CD8-positive, alpha-beta T cell (primary cell): ENCODE measurements at regions of chr6 and their contacts with region 1.

Region 1: DNA sequence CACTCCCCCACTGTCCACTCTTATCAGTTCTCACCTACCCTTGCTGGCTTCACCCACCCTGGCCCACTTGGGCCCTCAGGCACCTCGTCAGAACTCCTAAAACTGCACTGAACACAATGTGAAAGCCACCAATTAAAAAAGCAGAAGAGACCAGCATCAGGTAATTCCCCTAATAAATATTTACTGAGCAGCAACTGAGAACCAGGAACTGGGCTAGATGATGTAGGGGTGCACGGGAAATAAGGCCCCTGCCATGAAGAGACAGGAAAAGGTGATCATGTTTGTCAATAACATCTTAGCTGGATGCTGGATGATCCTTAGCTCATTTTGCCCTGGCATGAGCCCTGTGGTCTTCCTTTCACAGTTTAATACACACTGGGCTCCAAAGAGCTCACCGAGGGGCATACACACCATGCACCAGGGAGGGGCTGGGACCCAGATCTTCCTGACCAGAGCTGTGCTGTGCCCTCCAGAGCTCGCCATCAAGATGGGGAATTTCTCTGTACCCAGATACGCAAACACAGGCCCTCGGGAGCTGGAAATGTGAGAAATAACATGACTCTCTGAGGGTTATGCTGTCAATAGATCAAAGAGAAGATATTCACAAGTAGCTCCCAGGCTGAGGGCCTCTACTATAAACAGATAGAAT is 113.6 kb upstream of the SLC22A16 start:
- DNase-seq: peak in 1 of 9 experiments; percentile 10
- ATAC-seq: no peak
- H3K4me3 ChIP-seq: no peak overlapping the region
- H3K4me3 Mint-ChIP-seq: no peak overlapping the region
- H3K27ac ChIP-seq: no peak overlapping the region
- H3K27ac Mint-ChIP-seq: no peak overlapping the region
- H3K4me1 ChIP-seq: no peaks in the 10 kb centered on the region
- H3K4me1 Mint-ChIP-seq: no peaks in the 10 kb centered on the region
- H3K27me3 ChIP-seq: no peaks in the 10 kb centered on the region
- H3K27me3 Mint-ChIP-seq: no peaks in the 10 kb centered on the region
- CTCF ChIP-seq: no peak

Region 2: DNA sequence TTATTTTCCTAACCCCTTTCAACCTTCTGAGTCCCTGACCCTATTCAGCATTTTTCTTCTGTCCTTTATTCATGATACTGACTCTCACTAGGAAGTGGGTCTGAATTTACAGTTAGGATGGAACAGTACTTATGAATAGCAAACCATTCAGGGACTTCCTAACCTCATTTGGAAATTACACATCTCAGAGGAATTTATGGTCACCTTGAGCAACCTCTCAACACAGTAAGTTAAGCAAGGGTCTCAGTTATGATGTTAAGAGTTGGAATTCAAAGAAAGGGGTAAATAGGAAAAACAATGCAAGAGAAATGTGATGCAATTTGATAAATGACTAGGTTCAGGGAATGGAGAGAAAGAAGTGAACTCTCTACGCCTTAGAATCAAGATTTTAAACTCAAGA is 514.6 kb before region 1 on chr6:
- CTCF ChIA-PET with region 1: no interaction called
- POLR2A ChIA-PET with region 1: no interaction called
- intact Hi-C with region 1: no loop called
- DNase-seq: no peak
- ATAC-seq: no peak
- H3K4me3 ChIP-seq: no peak overlapping the region
- H3K4me3 Mint-ChIP-seq: no peak overlapping the region
- H3K27ac ChIP-seq: no peak overlapping the region
- H3K27ac Mint-ChIP-seq: no peak overlapping the region
- H3K4me1 ChIP-seq: no peaks in the 10 kb centered on the region
- H3K4me1 Mint-ChIP-seq: no peaks in the 10 kb centered on the region
- H3K27me3 ChIP-seq: no peaks in the 10 kb centered on the region
- H3K27me3 Mint-ChIP-seq: no peaks in the 10 kb centered on the region
- CTCF ChIP-seq: no peak

Region 3: DNA sequence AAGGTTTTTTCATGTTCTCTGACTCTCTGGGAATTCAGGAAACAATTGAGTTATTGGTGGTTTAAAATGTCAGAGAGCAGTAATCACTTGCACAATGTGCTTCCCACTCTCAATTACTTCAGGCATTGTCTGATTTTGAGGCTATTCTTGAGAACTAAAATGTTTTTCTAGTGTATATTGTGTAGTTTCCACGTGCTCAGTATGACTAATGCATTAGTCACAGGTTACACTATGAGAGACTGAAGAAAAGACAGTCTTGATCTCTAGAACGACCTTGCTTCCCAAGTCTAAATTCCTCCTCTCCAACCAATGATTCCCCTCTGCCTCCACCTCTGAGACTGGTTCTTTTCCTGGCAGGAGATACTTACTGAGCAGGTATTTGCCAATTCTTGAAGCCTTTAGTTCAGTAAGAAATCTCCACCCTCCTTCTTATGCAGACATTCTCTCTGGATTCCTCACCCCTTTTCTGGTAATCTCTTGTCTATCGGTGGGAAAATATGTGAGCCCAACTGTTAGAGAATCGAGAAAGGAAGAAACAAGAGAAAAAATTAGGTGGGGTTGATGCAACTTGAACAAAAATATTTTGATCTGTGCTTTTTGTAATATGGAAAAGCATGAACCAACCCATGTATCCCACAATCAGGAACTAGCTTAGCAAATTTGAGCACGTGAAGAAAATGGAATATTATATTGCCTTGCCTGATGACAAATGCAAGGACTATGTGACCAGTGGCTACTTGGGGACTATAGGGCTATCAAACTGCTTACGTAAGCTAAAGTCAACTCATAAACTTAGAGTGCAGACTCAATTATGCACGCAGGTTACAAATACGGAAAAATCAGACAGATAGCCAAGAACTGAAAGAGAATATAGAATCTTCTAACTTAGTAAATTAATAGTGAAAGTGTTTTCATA is 52.5 kb before region 1 on chr6:
- CTCF ChIA-PET with region 1: no interaction called
- POLR2A ChIA-PET with region 1: no interaction called
- intact Hi-C with region 1: loop called in 1 of 2 experiments (anchors 1 kb)
- DNase-seq: no peak
- ATAC-seq: no peak
- H3K4me3 ChIP-seq: no peak overlapping the region
- H3K4me3 Mint-ChIP-seq: no peak overlapping the region
- H3K27ac ChIP-seq: no peak overlapping the region
- H3K27ac Mint-ChIP-seq: no peak overlapping the region
- H3K4me1 ChIP-seq: no peaks in the 10 kb centered on the region
- H3K4me1 Mint-ChIP-seq: peaks cover 2% of the 10 kb centered on the region
- H3K27me3 ChIP-seq: no peaks in the 10 kb centered on the region
- H3K27me3 Mint-ChIP-seq: no peaks in the 10 kb centered on the region
- CTCF ChIP-seq: no peak

Region 4: GRCh38 chr6:110703010-110703905 is 113.3 kb after region 1 on chr6:
- CTCF ChIA-PET with region 1: no interaction called
- POLR2A ChIA-PET with region 1: no interaction called
- intact Hi-C with region 1: no loop called
- DNase-seq: no peak
- ATAC-seq: no peak
- H3K4me3 ChIP-seq: no peak overlapping the region
- H3K4me3 Mint-ChIP-seq: no peak overlapping the region
- H3K27ac ChIP-seq: no peak overlapping the region
- H3K27ac Mint-ChIP-seq: peak overlapping the region; percentile 53
- H3K4me1 ChIP-seq: no peaks in the 10 kb centered on the region
- H3K4me1 Mint-ChIP-seq: no peaks in the 10 kb centered on the region
- H3K27me3 ChIP-seq: no peaks in the 10 kb centered on the region
- H3K27me3 Mint-ChIP-seq: no peaks in the 10 kb centered on the region
- CTCF ChIP-seq: no peak

Region 5: GRCh38 chr6:110756817-110757216 is 166.8 kb after region 1 on chr6:
- CTCF ChIA-PET with region 1: no interaction called
- POLR2A ChIA-PET with region 1: no interaction called
- intact Hi-C with region 1: no loop called
- DNase-seq: no peak
- ATAC-seq: no peak
- H3K4me3 ChIP-seq: no peak overlapping the region
- H3K4me3 Mint-ChIP-seq: no peak overlapping the region
- H3K27ac ChIP-seq: no peak overlapping the region
- H3K27ac Mint-ChIP-seq: no peak overlapping the region
- H3K4me1 ChIP-seq: no peaks in the 10 kb centered on the region
- H3K4me1 Mint-ChIP-seq: peaks cover 5% of the 10 kb centered on the region
- H3K27me3 ChIP-seq: no peaks in the 10 kb centered on the region
- H3K27me3 Mint-ChIP-seq: no peaks in the 10 kb centered on the region
- CTCF ChIP-seq: no peak